Activated T-helper 2 cell treated with anti-CD3 and anti-CD28 coated beads, Interferon-gamma antibody, Interleukin-2, Interleukin-4, amounts not matched to agents 10 μg/mL and 5 μg/mL and 100 μg/mL, durations not matched to agents 14 hours and 24 hours and 36 hours (primary cell): ENCODE measurements at regions of chr11 and their contacts with region 1.

Region 1: GRCh38 chr11:123454060-123454651 is 24.1 kb downstream of the GRAMD1B start:
- DNase-seq: peak; percentile 73
- H3K4me3 Mint-ChIP-seq: peak overlapping the region; percentile 84
- H3K27ac Mint-ChIP-seq: peak overlapping the region; percentile 97
- H3K4me1 Mint-ChIP-seq: peaks cover 88% of the 10 kb centered on the region
- H3K27me3 Mint-ChIP-seq: no peaks in the 10 kb centered on the region

Region 2: GRCh38 chr11:123301696-123302400 is 152.3 kb before region 1 on chr11:
- intact Hi-C with region 1: loop called (anchors 1 kb)
- DNase-seq: peak; percentile 67
- H3K4me3 Mint-ChIP-seq: peak overlapping the region; percentile 58
- H3K27ac Mint-ChIP-seq: peak overlapping the region; percentile 84
- H3K4me1 Mint-ChIP-seq: peaks cover 45% of the 10 kb centered on the region
- H3K27me3 Mint-ChIP-seq: peaks cover 2% of the 10 kb centered on the region

Region 3: GRCh38 chr11:123438191-123438627 is 15.9 kb before region 1 on chr11:
- intact Hi-C with region 1: loop called (anchors 1 kb)
- DNase-seq: no peak
- H3K4me3 Mint-ChIP-seq: peak overlapping the region; percentile 42
- H3K27ac Mint-ChIP-seq: peak overlapping the region; percentile 79
- H3K4me1 Mint-ChIP-seq: peaks cover 81% of the 10 kb centered on the region
- H3K27me3 Mint-ChIP-seq: no peaks in the 10 kb centered on the region

Region 4: GRCh38 chr11:123478352-123478987 is 24.3 kb after region 1 on chr11:
- intact Hi-C with region 1: loop called (anchors 1 kb)
- DNase-seq: no peak
- H3K4me3 Mint-ChIP-seq: no peak overlapping the region
- H3K27ac Mint-ChIP-seq: peak overlapping the region; percentile 60
- H3K4me1 Mint-ChIP-seq: peaks cover 51% of the 10 kb centered on the region
- H3K27me3 Mint-ChIP-seq: no peaks in the 10 kb centered on the region

Region 5: DNA sequence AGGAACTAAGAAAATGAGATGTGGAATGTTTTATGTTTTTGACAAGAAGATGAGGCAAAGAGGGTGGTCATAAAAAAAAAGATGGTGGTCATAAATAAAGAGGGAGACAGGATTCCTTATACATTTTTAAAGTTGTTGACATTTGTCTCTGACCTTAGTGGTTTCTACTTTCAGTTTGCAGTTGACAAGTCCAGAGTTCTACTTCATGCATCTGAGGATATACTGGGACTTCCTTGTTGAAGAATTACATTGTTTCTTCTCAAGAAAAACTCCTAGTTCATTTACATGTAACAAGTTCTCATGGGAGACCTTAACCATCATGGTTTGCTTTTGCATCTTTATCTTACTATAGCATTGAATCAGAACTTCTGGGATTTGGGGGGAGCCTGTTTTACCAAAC is 299.0 kb after region 1 on chr11:
- intact Hi-C with region 1: loop called (anchors 10 kb)
- DNase-seq: no peak
- H3K4me3 Mint-ChIP-seq: no peak overlapping the region
- H3K27ac Mint-ChIP-seq: peak overlapping the region; percentile 90
- H3K4me1 Mint-ChIP-seq: peaks cover 60% of the 10 kb centered on the region
- H3K27me3 Mint-ChIP-seq: peaks cover 1% of the 10 kb centered on the region